GM12878 (cell line): ENCODE measurements at regions of chr10 and their contacts with region 1.

Region 1: DNA sequence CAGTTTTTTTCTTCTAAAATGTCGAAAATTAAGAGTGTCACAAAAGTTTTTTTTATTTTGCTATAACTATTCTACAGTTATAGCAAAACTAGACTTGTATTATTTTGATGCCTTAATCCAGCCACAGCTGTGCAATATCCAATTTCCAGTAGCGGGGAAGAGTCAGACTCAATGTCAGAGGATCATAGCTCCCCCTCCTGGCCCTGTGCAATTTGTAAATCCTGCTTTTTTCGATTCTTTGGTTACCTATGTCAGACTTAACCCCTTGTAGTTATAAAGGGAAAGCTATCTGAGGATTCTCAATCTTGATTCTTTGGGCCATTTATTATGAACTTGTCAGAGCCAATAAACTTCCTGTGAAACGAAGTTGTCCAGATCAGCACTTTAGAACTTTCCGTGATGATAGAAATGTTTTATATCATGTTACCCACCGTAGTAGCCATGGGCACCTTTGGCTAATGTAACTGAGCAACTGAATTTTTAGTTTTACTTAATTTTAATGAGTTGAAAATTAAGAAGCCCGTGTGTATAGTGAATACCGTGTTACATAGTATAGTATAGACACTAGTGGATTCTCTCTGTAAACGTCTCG is 87.7 kb upstream of the PRKCQ start:
- DNase-seq: no peak
- ATAC-seq: peak; percentile 36; the same call in 1 of the 3 replicates
- H3K4me3 ChIP-seq: no peak overlapping the region
- H3K27ac ChIP-seq: no peak overlapping the region
- H3K4me1 ChIP-seq: no peaks in the 10 kb centered on the region
- H3K27me3 ChIP-seq: peaks cover 0 to 1% of the 10 kb centered on the region in 2 experiments; a peak in 2 of 4 replicates
- CTCF ChIP-seq: peak; percentile 30 to 52 (median 34); a peak in 5 of 6 replicates
- EP300 ChIP-seq: no peak
- POLR2A ChIP-seq: no peak
- RAD21 ChIP-seq: peak; percentile 33; the same call in 1 of the 2 replicates

Region 2: GRCh38 chr10:6416892-6417512 is 250.8 kb before region 1 on chr10:
- CTCF ChIA-PET with region 1: interaction called, 90 read pairs
- POLR2A ChIA-PET with region 1: interaction called, 3 read pairs
- RAD21 ChIA-PET with region 1: interaction called, 6 read pairs
- SMC1A ChIA-PET with region 1: interaction called, 11 read pairs
- in situ Hi-C with region 1: no loop called
- intact Hi-C with region 1: no loop called
- DNase-seq: no peak
- ATAC-seq: peak; percentile 83
- H3K4me3 ChIP-seq: no peak overlapping the region
- H3K27ac ChIP-seq: no peak overlapping the region
- H3K4me1 ChIP-seq: no peaks in the 10 kb centered on the region
- H3K27me3 ChIP-seq: no peaks in the 10 kb centered on the region; a peak in 2 of 4 replicates
- CTCF ChIP-seq: peak; percentile 65 to 82 (median 68)
- EP300 ChIP-seq: no peak
- POLR2A ChIP-seq: no peak
- RAD21 ChIP-seq: peak; percentile 87

Region 3: GRCh38 chr10:6445501-6446316 is 222.1 kb before region 1 on chr10:
- CTCF ChIA-PET with region 1: interaction called, 14 read pairs
- POLR2A ChIA-PET with region 1: interaction called, 4 read pairs
- RAD21 ChIA-PET with region 1: interaction called, 3 read pairs
- SMC1A ChIA-PET with region 1: interaction called, 15 read pairs
- in situ Hi-C with region 1: no loop called
- intact Hi-C with region 1: no loop called
- DNase-seq: no peak
- ATAC-seq: peak; percentile 82
- H3K4me3 ChIP-seq: no peak overlapping the region
- H3K27ac ChIP-seq: no peak overlapping the region
- H3K4me1 ChIP-seq: no peaks in the 10 kb centered on the region
- H3K27me3 ChIP-seq: no peaks in the 10 kb centered on the region; a peak in 1 of 4 replicates
- CTCF ChIP-seq: peak; percentile 61 to 82 (median 67)
- EP300 ChIP-seq: no peak
- POLR2A ChIP-seq: no peak
- RAD21 ChIP-seq: peak; percentile 69

Region 4: GRCh38 chr10:6647811-6648526 is 19.8 kb before region 1 on chr10:
- CTCF ChIA-PET with region 1: interaction called, 5 read pairs
- POLR2A ChIA-PET with region 1: no interaction called
- RAD21 ChIA-PET with region 1: interaction called, 3 read pairs
- SMC1A ChIA-PET with region 1: interaction called, 5 read pairs
- in situ Hi-C with region 1: no loop called
- intact Hi-C with region 1: loop called (anchors 2 kb)
- DNase-seq: no peak
- ATAC-seq: peak; percentile 89
- H3K4me3 ChIP-seq: no peak overlapping the region
- H3K27ac ChIP-seq: no peak overlapping the region
- H3K4me1 ChIP-seq: no peaks in the 10 kb centered on the region
- H3K27me3 ChIP-seq: no peaks in the 10 kb centered on the region; a peak in 1 of 4 replicates
- CTCF ChIP-seq: peak; percentile 43 to 74 (median 65)
- EP300 ChIP-seq: no peak
- POLR2A ChIP-seq: no peak
- RAD21 ChIP-seq: peak; percentile 45

Region 5: GRCh38 chr10:6678211-6678803 is 10.5 kb after region 1 on chr10:
- CTCF ChIA-PET with region 1: interaction called, 34 read pairs
- POLR2A ChIA-PET with region 1: no interaction called
- RAD21 ChIA-PET with region 1: no interaction called
- SMC1A ChIA-PET with region 1: interaction called, 21 read pairs
- in situ Hi-C with region 1: no loop called
- intact Hi-C with region 1: no loop called
- DNase-seq: no peak
- ATAC-seq: peak; percentile 77
- H3K4me3 ChIP-seq: no peak overlapping the region
- H3K27ac ChIP-seq: no peak overlapping the region
- H3K4me1 ChIP-seq: no peaks in the 10 kb centered on the region
- H3K27me3 ChIP-seq: no peaks in the 10 kb centered on the region
- CTCF ChIP-seq: peak; percentile 73 to 75 (median 75)
- EP300 ChIP-seq: no peak
- POLR2A ChIP-seq: no peak
- RAD21 ChIP-seq: peak; percentile 72

Region 6: DNA sequence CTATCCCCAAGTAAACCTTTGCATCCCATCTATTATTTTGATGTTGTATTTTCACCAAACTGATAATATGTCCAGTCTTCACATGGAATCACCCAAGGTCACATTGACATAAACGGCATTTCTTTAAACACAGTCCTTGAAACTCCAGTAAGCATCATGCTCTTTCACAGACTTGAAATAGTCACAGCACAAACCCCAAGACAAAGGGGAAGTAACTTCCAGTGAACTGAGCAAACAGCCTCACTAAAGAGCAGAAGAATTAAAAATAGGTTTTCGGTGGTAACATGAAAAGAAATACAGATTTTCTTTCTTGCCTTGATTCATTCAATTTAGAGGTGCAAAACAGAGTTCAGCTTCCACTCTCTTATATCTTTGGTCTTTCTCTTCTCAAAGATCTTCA is 489.3 kb after region 1 on chr10:
- CTCF ChIA-PET with region 1: no interaction called
- POLR2A ChIA-PET with region 1: no interaction called
- RAD21 ChIA-PET with region 1: no interaction called
- SMC1A ChIA-PET with region 1: no interaction called
- in situ Hi-C with region 1: no loop called
- intact Hi-C with region 1: loop called (anchors 5 kb)
- DNase-seq: no peak
- ATAC-seq: no peak; the same call in 2 of the 3 replicates
- H3K4me3 ChIP-seq: no peak overlapping the region
- H3K27ac ChIP-seq: no peak overlapping the region
- H3K4me1 ChIP-seq: peaks cover 6% of the 10 kb centered on the region; the same call in 1 of the 2 replicates
- H3K27me3 ChIP-seq: no peaks in the 10 kb centered on the region
- CTCF ChIP-seq: no peak
- EP300 ChIP-seq: no peak
- POLR2A ChIP-seq: no peak
- RAD21 ChIP-seq: no peak